Activated CD8-positive, alpha-beta T cell treated with anti-CD3 and anti-CD28 coated beads for 36 hours (primary cell): ENCODE measurements at regions of chr1 and their contacts with region 1.

Region 1: DNA sequence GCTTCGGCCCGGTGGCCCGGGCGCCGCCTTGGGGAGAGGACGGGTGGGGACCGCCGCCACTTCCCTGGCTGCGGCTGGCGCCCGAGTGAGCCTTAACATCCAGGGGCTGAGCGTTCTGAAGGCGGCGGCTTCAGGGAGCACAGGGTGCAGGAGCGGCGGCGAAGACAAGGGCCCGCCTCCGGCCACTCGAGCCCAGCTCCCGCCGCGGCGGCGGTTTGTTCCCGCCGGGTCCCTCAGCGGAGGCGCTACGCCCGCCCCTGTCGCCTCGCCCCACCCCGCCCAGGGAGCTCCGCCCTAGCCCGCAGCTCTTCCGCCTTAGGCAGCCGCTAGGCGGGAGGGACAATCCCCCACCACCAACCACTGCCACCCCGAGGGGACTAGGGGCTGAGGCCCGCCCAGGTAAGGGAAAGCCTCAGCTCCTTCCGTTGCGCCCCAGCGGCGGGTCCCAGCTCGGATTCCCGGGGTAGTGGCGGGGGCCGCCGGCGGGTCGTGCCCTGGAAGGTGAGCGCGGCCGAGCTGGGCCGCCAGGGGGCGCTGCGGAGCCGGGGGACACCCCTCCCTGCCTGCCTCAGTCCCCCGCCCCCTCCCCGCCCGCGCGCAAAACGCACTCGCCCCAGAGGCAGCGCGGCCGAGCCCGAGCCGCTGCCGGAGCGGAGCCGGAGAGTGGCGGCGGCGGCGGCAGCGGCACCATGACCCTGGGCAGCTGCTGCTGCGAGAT is at the start of gene FOXD2:
- DNase-seq: peak; percentile 94
- ATAC-seq: peak; percentile 93
- H3K4me3 Mint-ChIP-seq: peak within 1 kb of the TSS; percentile 89
- H3K27ac Mint-ChIP-seq: peak within 1 kb of the TSS; percentile 76
- H3K4me1 Mint-ChIP-seq: peaks cover 27% of the 10 kb centered on the region
- H3K27me3 Mint-ChIP-seq: peaks cover 32% of the 10 kb centered on the region
- CTCF ChIP-seq: peak; percentile 98
- total RNA-seq, gene FOXD2: 0.11 to 0.18 TPM

Region 2: DNA sequence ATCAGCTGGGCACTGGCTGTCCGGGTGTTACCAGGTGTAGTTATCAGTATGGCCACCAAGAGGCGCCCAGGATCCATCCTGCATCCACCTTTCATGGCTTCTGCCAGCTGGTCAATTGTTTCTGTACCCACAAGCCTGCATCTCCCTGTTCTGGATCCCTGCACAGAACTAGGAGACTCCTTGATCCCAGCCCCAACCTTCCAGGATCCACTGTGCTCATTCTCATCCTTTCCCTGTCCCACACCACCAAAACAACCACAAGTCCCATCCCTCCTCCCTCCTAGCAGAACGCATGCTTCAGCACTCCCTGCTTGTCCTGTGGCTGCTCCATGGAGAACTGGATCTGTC is 48.7 kb before region 1 on chr1:
- CTCF ChIA-PET with region 1: interaction called, 14 read pairs
- POLR2A ChIA-PET with region 1: no interaction called
- intact Hi-C with region 1: no loop called
- DNase-seq: peak; percentile 73
- ATAC-seq: peak; percentile 89
- H3K4me3 Mint-ChIP-seq: no peak overlapping the region
- H3K27ac Mint-ChIP-seq: no peak overlapping the region
- H3K4me1 Mint-ChIP-seq: no peaks in the 10 kb centered on the region
- H3K27me3 Mint-ChIP-seq: no peaks in the 10 kb centered on the region
- CTCF ChIP-seq: peak; percentile 65

Region 3: DNA sequence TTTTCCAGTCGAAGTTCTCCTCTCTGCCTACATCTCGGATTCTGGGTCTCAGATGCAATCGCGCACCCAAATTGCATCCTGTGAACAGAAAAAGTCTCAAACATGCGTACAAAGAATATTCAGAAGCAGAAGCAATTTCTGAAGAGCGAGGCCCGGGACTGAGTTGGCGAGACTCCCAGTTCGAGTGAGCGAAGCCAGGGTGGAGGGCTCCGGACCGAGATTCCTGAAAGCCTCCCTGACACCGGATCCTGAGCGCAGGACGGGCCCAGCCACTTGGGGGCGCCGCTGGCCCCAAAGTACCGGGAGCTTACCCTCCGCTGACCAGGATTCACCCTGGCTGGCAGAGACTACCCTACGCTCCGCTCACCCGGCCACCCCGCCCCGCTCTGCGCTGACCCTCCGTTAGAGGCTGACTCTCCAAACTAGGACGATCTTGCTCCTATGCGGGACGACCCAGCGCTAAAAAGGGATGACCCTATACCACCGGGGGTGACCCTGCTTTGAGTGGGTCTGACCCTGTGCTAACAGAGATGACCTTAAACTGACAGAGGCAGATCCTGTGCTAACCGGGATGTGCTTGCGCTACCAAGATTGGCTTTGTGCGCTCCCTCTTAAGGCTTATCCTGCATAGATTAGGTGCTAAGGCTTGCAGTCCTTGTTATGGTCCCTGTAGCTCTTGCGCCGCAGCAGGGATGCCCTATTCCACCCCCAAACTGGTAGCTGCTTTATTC is 12.4 kb after region 1 on chr1:
- CTCF ChIA-PET with region 1: interaction called, 42 read pairs
- POLR2A ChIA-PET with region 1: interaction called, 5 read pairs
- intact Hi-C with region 1: no loop called
- DNase-seq: peak; percentile 29
- ATAC-seq: peak; percentile 42
- H3K4me3 Mint-ChIP-seq: no peak overlapping the region
- H3K27ac Mint-ChIP-seq: no peak overlapping the region
- H3K4me1 Mint-ChIP-seq: peaks cover 7% of the 10 kb centered on the region
- H3K27me3 Mint-ChIP-seq: peaks cover 74% of the 10 kb centered on the region
- CTCF ChIP-seq: peak; percentile 45

Region 4: GRCh38 chr1:47703981-47704596 is 266.5 kb after region 1 on chr1:
- CTCF ChIA-PET with region 1: interaction called, 125 read pairs
- POLR2A ChIA-PET with region 1: no interaction called
- intact Hi-C with region 1: no loop called
- DNase-seq: no peak
- ATAC-seq: no peak
- H3K4me3 Mint-ChIP-seq: no peak overlapping the region
- H3K27ac Mint-ChIP-seq: no peak overlapping the region
- H3K4me1 Mint-ChIP-seq: peaks cover 3% of the 10 kb centered on the region
- H3K27me3 Mint-ChIP-seq: peaks cover 20% of the 10 kb centered on the region
- CTCF ChIP-seq: no peak

Region 5: DNA sequence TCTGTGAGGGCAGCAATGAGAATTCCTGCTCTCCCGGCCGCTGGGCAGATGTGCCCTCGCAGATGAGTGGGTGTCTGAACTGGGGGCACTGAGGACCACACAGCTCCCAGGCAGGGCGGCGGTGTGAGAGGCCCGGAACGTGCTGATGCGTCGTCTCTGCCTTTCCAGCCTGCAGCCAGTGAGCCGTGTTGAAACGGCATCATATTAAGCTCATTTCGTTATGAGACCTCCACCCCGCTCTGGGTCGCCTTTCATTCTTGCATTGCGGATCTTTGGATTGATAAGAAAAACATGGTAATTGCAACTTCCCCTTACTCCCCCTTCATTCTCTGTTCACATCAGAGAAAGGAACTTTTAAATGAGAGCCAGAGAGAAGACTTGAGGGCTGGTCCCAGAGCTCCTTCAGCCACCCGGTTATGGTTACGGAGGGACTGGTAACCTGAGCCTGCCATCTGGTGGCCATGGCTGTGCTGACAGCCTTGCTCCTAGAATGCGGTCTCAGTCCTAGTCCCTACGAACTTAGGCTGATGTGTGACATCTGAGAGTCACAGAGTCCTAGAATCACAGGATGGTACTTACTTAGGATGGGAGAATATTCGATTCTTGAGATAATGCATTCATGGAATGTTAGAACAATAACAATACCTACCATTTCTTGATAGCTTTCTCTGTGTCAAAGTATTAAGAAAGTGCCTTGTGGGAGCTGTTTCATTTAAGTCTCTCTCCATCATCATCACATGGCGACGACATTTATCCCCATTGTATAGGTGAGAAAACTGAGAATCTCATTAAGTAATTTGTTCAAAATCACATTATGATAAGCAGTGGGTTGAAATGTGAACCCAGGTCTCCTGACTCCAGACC is 288.6 kb after region 1 on chr1:
- CTCF ChIA-PET with region 1: interaction called, 47 read pairs
- POLR2A ChIA-PET with region 1: no interaction called
- intact Hi-C with region 1: loop called (anchors 5 kb)
- DNase-seq: peak; percentile 82
- ATAC-seq: peak; percentile 94
- H3K4me3 Mint-ChIP-seq: peak overlapping the region; percentile 4
- H3K27ac Mint-ChIP-seq: no peak overlapping the region
- H3K4me1 Mint-ChIP-seq: peaks cover 6% of the 10 kb centered on the region
- H3K27me3 Mint-ChIP-seq: peaks cover 34% of the 10 kb centered on the region
- CTCF ChIP-seq: peak; percentile 68